ENCODE measurements at regions of chr2 and their contacts with region 1.

Region 1: GRCh38 chr2:190648289-190649034 is 421 bp upstream of the NAB1 start:
- DNase-seq: peak; percentile 59 to 95
- H3K4me3 ChIP-seq: peak overlapping the region; percentile 69 to 92
- H3K27ac ChIP-seq: peak overlapping the region; percentile 89 to 93
- H3K4me1 ChIP-seq: peaks cover 0 to 18% of the 10 kb centered on the region in 2 donors
- H3K27me3 ChIP-seq: no peaks in the 10 kb centered on the region
- CTCF ChIP-seq: no peak

Region 2: DNA sequence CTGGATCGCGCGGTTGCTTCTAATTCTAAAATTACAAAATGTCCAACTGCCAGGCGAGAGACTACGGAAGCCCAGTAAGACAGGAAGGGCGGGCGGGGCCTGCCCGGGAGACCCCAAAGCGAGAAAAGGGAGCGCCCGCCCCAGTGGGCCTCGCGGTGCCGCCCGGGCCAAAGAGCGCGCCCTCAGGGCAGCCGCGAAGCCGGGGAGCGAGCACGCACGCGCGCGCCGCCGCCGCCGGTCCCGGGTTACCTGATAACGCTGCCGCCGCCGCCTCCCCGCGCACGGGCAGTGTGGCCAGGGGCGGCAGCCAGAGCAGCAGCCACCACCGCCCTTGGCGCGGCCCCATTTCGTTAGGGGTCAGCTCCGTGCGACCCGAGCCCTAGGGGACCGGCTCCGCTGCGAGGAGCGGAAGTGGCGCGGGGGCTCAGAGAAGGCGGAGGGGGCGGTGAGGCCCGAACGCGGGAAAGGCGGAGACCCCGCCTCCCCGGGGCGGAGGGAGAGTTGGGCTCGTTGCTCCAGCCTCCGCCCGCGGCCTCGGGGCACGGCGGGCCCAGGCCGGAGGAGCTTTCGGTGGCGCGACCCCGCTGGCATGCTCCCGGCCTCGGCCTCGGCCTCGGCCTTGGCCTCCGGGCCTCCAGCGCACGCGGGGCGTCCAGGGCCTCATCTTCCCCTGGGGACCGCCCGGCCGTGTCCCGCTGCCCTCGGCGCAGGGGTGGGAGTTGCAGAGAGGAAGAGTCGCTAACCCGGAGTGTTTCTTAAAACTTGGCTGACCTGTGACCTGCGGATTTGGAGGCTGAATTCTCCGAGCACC is 113.9 kb before region 1 on chr2 and contains the start of gene NEMP2:
- intact Hi-C with region 1: loop called (anchors 1 kb)
- DNase-seq: peak in 1 of 2 donors; percentile 83
- H3K4me3 ChIP-seq: peak within 1 kb of the TSS; percentile 70 to 79
- H3K27ac ChIP-seq: peak within 1 kb of the TSS; percentile 96 to 97
- H3K4me1 ChIP-seq: peaks cover 0 to 9% of the 10 kb centered on the region in 2 donors
- H3K27me3 ChIP-seq: no peaks in the 10 kb centered on the region
- CTCF ChIP-seq: no peak
- total RNA-seq, gene NEMP2: 0.43 TPM

Region 3: DNA sequence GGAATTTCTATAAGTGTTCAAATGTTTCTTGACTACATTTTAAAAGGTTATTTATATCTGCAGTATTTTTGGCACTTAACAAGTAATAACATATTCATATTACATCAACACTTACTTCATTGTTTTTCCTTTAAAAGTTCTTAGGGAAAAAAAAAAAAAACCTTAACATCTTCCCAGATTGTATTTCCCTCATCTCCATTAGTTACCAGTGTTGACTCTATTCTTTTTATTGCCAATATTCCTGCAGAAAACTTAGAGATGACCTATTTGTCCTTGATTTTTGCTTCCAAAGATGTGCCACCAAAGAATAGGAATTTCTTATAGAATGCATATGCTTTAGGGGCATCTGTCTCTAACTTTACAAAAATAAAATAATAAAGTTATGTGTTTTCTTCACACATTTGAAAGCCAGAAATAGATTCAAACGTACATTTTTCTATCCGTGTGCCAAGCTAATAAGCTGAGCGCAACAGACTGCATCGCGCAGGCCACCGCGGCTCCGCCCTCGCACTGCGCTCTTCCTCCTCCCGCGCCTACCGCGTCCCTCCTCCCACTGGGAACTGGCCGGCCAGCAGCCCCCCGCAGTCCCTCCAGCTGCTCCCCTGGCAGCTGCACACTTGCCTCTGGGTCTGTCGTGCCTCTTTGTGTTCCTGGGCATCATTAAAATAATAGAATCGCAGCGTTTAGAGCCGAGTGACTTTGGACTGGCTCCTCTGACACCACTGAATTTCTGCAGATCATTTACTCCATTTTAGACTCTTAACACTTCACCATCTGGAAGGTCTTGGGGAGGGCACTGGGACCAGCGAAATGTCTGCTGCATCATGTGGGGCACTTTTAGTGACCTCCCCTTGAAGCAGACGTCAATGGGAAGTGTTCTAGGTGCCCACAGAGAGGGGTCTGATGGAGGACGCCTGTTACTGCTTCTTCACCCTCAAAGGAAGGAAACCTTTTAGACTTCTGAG is 20.7 kb before region 1 on chr2:
- intact Hi-C with region 1: loop called (anchors 2 kb)
- DNase-seq: no peak
- H3K4me3 ChIP-seq: peak overlapping the region; percentile 69 to 81
- H3K27ac ChIP-seq: peak overlapping the region; percentile 77 to 79
- H3K4me1 ChIP-seq: peaks cover 0 to 4% of the 10 kb centered on the region in 2 donors
- H3K27me3 ChIP-seq: no peaks in the 10 kb centered on the region
- CTCF ChIP-seq: no peak

Region 4: GRCh38 chr2:190636373-190636772 is 12.1 kb before region 1 on chr2:
- intact Hi-C with region 1: loop called (anchors 1 kb)
- DNase-seq: no peak
- H3K4me3 ChIP-seq: no peak overlapping the region
- H3K27ac ChIP-seq: peak overlapping the region; percentile 52 to 55
- H3K4me1 ChIP-seq: peaks cover 4 to 17% of the 10 kb centered on the region in 2 donors
- H3K27me3 ChIP-seq: no peaks in the 10 kb centered on the region
- CTCF ChIP-seq: no peak

Region 5: GRCh38 chr2:191020221-191020741 is 371.8 kb after region 1 on chr2:
- intact Hi-C with region 1: loop called (anchors 5 kb)
- DNase-seq: peak; percentile 73 to 96
- H3K4me3 ChIP-seq: peak overlapping the region; percentile 77 to 85
- H3K27ac ChIP-seq: peak overlapping the region; percentile 92 to 93
- H3K4me1 ChIP-seq: peaks cover 0 to 4% of the 10 kb centered on the region in 2 donors
- H3K27me3 ChIP-seq: no peaks in the 10 kb centered on the region
- CTCF ChIP-seq: peak; percentile 9 to 47 (median 18)

Region 6: DNA sequence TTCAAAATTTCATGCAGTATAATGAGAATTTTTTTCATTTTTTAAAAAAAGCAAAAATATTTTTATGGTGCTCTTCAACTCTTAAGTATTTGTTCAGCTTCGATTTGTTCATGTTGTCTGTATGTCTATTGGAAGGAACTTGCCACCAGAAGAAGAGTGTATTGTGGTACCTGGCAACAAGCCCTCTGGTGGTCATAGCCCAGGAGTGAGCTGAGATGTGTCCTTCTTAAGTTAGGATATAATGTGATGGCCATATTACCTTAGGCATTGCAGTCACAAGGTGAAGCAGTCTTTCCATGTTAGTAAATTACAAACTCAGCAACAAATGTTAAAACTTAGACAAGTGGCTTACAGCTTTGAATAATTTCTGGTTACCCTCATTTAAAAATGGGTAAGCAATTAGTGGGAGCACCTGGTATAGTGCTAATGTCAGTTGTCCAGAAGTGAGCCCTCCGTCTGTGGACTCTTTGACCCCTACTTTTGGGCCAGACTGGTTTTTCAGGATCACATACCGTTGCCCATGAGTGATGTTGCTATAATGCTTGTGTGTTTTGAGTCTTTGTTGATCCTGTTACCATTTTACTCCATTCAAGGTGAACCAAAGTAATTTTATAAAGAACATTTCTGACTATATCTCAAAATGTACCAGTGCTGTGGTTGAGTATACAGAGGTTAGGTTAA is 654.1 kb after region 1 on chr2:
- intact Hi-C with region 1: no loop called
- DNase-seq: no peak
- H3K4me3 ChIP-seq: no peak overlapping the region
- H3K27ac ChIP-seq: no peak overlapping the region
- H3K4me1 ChIP-seq: peaks cover 3 to 24% of the 10 kb centered on the region in 2 donors
- H3K27me3 ChIP-seq: no peaks in the 10 kb centered on the region
- CTCF ChIP-seq: no peak